ENCODE measurements at regions of chr1 and their contacts with region 1.

Region 1: GRCh38 chr1:63662056-63662836 is 69.0 kb downstream of the PGM1 start:
- DNase-seq: peak; percentile 85

Region 2: DNA sequence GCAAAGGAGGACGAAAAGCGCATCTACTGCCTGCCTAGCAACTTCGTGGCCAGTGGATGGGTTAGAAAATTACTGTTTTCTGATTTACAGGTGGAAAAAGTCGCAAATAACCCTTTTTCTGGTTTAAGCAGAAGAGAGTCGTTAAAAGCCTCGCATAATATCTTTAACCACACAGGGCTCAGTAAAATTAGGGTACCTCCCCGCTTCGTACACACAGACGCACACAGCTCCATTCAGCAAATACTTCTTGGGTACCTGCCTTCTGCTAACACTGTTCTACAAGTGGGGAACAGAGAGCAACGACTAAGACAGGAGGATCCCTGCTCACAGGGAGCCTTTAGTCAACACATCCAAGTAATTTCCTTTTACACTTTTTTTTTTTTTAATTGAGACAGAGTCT is 294.1 kb before region 1 on chr1:
- intact Hi-C with region 1: no loop called
- DNase-seq: no peak

Region 3: GRCh38 chr1:63615768-63616420 is 46.4 kb before region 1 on chr1:
- intact Hi-C with region 1: no loop called
- DNase-seq: no peak

Region 4: DNA sequence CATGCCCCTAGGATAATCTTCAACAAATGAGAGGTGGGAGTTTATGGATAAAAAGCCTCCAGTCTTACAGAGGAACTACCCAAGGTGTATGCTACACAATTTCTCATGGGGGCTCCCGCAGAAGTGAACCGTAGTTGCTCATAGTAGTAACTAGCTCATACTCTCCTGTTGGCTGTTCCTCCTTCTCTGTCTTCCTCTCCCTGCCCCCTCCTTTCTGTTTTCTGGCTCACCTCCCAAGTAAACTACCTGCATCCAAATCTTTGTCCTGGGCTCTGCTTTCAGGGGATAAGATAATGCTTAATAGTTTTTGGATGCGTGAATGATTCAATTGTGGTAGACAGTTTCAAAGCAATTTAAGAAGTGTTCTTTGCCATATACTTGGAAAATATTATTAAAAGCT is 21.5 kb after region 1 on chr1:
- intact Hi-C with region 1: loop called in 1 of 2 experiments (anchors 1 kb)
- DNase-seq: no peak

Measured in posterior vena cava (tissue), 2 donors.